Stomach (tissue), 19 donors: ENCODE measurements at regions of chr9 and their contacts with region 1.

Region 1: GRCh38 chr9:16509997-16510396 is 360.5 kb downstream of the BNC2 start:
- DNase-seq: no peak
- H3K4me3 ChIP-seq: no peak overlapping the region
- H3K27ac ChIP-seq: no peak overlapping the region
- H3K4me1 ChIP-seq: peaks cover 0 to 27% (median 15%) of the 10 kb centered on the region in 4 donors
- H3K27me3 ChIP-seq: no peaks in the 10 kb centered on the region
- CTCF ChIP-seq: no peak
- EP300 ChIP-seq: no peak
- POLR2A ChIP-seq: no peak

Region 2: GRCh38 chr9:15295761-15296405 is 1214.1 kb before region 1 on chr9:
- intact Hi-C with region 1: no loop called
- DNase-seq: peak in 1 of 2 donors; percentile 61
- H3K4me3 ChIP-seq: peak overlapping the region; percentile 33 to 41 (median 39)
- H3K27ac ChIP-seq: peak overlapping the region; percentile 84 to 89 (median 86)
- H3K4me1 ChIP-seq: peaks cover 27 to 54% (median 43%) of the 10 kb centered on the region in 4 donors
- H3K27me3 ChIP-seq: no peaks in the 10 kb centered on the region
- CTCF ChIP-seq: no peak
- EP300 ChIP-seq: no peak
- POLR2A ChIP-seq: no peak

Region 3: GRCh38 chr9:16012621-16013020 is 497.4 kb before region 1 on chr9:
- intact Hi-C with region 1: no loop called
- DNase-seq: no peak
- H3K4me3 ChIP-seq: no peak overlapping the region
- H3K27ac ChIP-seq: no peak overlapping the region
- H3K4me1 ChIP-seq: no peaks in the 10 kb centered on the region
- H3K27me3 ChIP-seq: no peaks in the 10 kb centered on the region
- CTCF ChIP-seq: no peak
- EP300 ChIP-seq: no peak
- POLR2A ChIP-seq: no peak

Region 4: GRCh38 chr9:16442622-16443021 is 67.4 kb before region 1 on chr9:
- intact Hi-C with region 1: loop called (anchors 10 kb)
- DNase-seq: no peak
- H3K4me3 ChIP-seq: no peak overlapping the region
- H3K27ac ChIP-seq: no peak overlapping the region
- H3K4me1 ChIP-seq: peaks cover 0 to 23% (median 4%) of the 10 kb centered on the region in 4 donors
- H3K27me3 ChIP-seq: no peaks in the 10 kb centered on the region
- CTCF ChIP-seq: no peak
- EP300 ChIP-seq: no peak
- POLR2A ChIP-seq: no peak

Region 5: GRCh38 chr9:16642421-16643109 is 132.6 kb after region 1 on chr9:
- intact Hi-C with region 1: no loop called
- DNase-seq: no peak
- H3K4me3 ChIP-seq: no peak overlapping the region
- H3K27ac ChIP-seq: peak overlapping the region in 2 of 5 donors; percentile 1 to 8
- H3K4me1 ChIP-seq: peaks cover 0 to 3% (median 0%) of the 10 kb centered on the region in 4 donors
- H3K27me3 ChIP-seq: no peaks in the 10 kb centered on the region
- CTCF ChIP-seq: no peak
- EP300 ChIP-seq: no peak
- POLR2A ChIP-seq: no peak